GM13977 (cell line): ENCODE measurements at regions of chr3 and their contacts with region 1.

Region 1: DNA sequence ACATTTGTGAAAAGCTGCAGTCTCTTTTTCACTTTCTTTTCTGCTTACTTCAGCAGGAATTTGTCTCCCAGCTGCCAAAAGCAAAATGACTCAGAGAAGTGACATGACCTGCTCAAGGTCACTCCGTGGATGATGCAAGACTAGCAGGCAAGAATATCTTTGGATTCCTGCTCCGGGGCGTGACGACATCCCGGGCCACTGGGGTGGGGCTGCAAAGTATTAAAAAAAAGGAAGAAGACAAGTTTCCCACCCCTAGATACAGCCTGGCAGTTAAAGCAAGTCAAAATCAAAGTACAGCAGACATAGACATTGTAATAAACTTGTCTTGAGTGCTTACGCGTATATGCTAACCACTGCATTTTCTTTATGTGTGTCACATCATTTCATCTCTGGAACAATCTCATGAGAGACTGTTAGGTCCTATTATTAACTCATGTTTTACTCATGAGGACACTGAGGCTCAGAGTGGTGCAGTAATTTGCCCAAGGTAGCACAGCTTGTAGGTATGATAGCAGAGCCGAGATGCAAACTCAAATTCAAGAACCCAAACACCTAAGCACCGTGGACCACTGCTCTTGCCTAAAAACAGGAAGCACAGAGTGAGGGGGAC is 485.2 kb upstream of the PROK2 start:
- DNase-seq: no peak
- CTCF ChIP-seq: no peak

Region 2: DNA sequence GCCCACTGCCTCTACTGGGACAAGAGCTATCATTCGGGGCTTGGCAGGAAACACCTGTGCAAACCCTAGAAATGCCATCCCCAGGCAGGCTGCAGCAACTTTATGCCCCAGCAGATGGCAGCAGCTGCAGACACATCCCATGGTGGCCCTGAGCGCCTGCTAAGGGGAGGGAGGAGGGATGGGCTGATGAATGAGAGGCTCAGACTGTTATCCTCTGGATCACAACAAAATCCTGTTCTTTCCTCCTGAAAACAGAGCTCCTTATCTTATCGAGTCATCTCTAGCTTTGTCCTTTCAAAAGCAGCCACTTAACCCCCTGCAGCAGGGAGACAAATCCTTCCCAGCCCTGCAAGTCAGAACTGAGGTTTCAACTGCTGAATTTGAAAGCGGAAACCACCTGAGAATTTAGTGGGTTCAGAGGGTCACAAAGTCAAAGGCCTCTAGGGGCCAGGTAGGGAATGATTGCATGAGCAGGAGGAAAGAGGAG is 394.7 kb before region 1 on chr3:
- in situ Hi-C with region 1: loop called (anchors 10 kb)
- DNase-seq: peak; percentile 71
- CTCF ChIP-seq: peak; percentile 94

Region 3: GRCh38 chr3:72082186-72082715 is 187.9 kb before region 1 on chr3:
- in situ Hi-C with region 1: loop called (anchors 25 kb)
- DNase-seq: peak; percentile 77
- CTCF ChIP-seq: no peak

Region 4: GRCh38 chr3:73332558-73332957 is 1062.4 kb after region 1 on chr3:
- in situ Hi-C with region 1: no loop called
- DNase-seq: no peak
- CTCF ChIP-seq: no peak